Aorta (tissue), 5 donors: ENCODE measurements at regions of chrX and their contacts with region 1.

Region 1: GRCh38 chrX:138745196-138745595 is 33.7 kb upstream of the FGF13 start:
- DNase-seq: no peak
- ATAC-seq: no peak
- H3K4me3 ChIP-seq: no peak overlapping the region
- H3K27ac ChIP-seq: no peak overlapping the region
- H3K4me1 ChIP-seq: no peaks in the 10 kb centered on the region
- H3K27me3 ChIP-seq: no peaks in the 10 kb centered on the region

Region 2: DNA sequence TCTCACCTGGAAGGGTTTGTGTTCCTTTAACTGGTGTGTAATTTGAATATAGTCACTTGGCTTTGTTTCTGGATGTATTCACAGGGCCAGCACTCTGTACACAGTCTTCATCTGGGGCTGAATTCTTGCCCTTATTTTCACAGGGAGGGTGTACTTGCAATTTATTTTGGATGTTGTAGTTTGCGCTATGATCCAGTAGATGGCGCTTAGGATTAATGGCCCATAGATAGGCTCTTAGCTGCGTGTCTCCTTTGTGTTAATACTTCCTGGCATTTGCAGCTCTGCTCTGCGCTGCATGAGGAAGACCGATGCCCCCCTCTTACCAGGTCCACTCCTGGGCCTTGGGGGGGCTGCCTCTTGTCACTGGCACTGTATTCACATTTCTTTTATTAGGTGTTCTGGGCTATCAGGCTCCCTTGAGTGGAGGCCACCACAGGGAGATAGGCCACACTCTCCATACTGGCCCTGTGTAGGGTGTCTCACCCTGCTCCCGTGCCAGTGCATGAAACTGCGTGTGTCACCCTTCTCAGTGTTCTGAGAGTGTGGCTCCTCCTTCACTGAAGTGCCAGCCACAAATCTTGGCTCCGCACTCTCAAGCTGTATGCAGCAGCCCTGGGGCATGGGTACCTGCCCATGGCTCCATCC is 617.0 kb before region 1 on chrX:
- intact Hi-C with region 1: loop called (anchors 5 kb)
- DNase-seq: no peak
- ATAC-seq: peak; percentile 77
- H3K4me3 ChIP-seq: no peak overlapping the region
- H3K27ac ChIP-seq: no peak overlapping the region
- H3K4me1 ChIP-seq: no peaks in the 10 kb centered on the region
- H3K27me3 ChIP-seq: no peaks in the 10 kb centered on the region

Region 3: DNA sequence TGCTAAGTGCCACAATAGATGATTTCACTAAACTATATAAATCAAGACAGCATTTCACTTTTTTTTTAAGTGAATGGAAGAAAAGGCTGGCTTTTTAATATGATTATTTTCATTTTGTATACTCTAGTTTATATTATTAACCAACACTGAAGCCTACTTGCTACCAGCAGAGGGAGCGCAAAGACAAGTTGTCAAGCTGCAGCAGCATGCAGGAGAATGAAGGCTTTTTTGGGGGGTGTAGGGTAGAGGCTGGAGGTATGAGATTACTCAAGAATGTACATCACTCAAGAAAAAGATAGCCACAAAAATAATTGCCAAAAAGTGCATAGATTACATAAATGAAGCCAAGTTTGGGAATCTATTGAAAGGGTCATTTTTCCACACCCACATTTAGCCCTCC is 553.2 kb before region 1 on chrX:
- intact Hi-C with region 1: loop called (anchors 5 kb)
- DNase-seq: no peak
- ATAC-seq: no peak
- H3K4me3 ChIP-seq: no peak overlapping the region
- H3K27ac ChIP-seq: no peak overlapping the region
- H3K4me1 ChIP-seq: no peaks in the 10 kb centered on the region
- H3K27me3 ChIP-seq: no peaks in the 10 kb centered on the region

Region 4: DNA sequence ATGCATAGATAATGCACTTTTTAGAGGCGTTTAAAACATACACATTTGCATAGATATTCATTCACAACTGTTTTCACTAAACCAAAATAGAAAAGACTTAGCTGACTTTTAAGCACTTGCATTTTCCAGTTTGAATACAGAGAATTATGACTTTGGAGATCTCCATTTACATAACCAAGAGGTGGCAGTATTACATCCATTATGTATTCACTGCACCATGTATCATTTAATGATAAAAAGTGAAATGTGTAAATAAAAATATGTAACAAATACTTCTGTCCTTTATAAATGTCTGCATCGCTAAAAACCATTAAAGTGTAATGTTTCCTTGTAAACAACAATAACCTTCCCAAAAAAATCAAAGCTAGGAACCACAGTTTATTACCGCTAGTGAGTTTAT is 446.9 kb before region 1 on chrX:
- intact Hi-C with region 1: loop called (anchors 5 kb)
- DNase-seq: no peak
- ATAC-seq: no peak
- H3K4me3 ChIP-seq: no peak overlapping the region
- H3K27ac ChIP-seq: no peak overlapping the region
- H3K4me1 ChIP-seq: no peaks in the 10 kb centered on the region
- H3K27me3 ChIP-seq: no peaks in the 10 kb centered on the region

Region 5: GRCh38 chrX:138964501-138964900 is 219.3 kb after region 1 on chrX:
- intact Hi-C with region 1: no loop called
- DNase-seq: no peak
- ATAC-seq: no peak
- H3K4me3 ChIP-seq: no peak overlapping the region
- H3K27ac ChIP-seq: no peak overlapping the region
- H3K4me1 ChIP-seq: no peaks in the 10 kb centered on the region
- H3K27me3 ChIP-seq: no peaks in the 10 kb centered on the region

Region 6: GRCh38 chrX:139077281-139078250 is 332.4 kb after region 1 on chrX:
- intact Hi-C with region 1: no loop called
- DNase-seq: no peak
- ATAC-seq: no peak
- H3K4me3 ChIP-seq: no peak overlapping the region
- H3K27ac ChIP-seq: no peak overlapping the region
- H3K4me1 ChIP-seq: no peaks in the 10 kb centered on the region
- H3K27me3 ChIP-seq: no peaks in the 10 kb centered on the region